OCI-LY7 (cell line): ENCODE measurements at regions of chr19 and their contacts with region 1.

Region 1: GRCh38 chr19:3984908-3985642 is at the start of gene EEF2:
- DNase-seq: peak; percentile 96
- H3K4me3 ChIP-seq: peak within 1 kb of the TSS; percentile 93
- H3K27ac ChIP-seq: peak within 1 kb of the TSS; percentile 87
- H3K4me1 ChIP-seq: peaks cover 42% of the 10 kb centered on the region
- CTCF ChIP-seq: no peak
- total RNA-seq, gene EEF2: 1,633 and 1,634 TPM in 2 replicates

Region 2: DNA sequence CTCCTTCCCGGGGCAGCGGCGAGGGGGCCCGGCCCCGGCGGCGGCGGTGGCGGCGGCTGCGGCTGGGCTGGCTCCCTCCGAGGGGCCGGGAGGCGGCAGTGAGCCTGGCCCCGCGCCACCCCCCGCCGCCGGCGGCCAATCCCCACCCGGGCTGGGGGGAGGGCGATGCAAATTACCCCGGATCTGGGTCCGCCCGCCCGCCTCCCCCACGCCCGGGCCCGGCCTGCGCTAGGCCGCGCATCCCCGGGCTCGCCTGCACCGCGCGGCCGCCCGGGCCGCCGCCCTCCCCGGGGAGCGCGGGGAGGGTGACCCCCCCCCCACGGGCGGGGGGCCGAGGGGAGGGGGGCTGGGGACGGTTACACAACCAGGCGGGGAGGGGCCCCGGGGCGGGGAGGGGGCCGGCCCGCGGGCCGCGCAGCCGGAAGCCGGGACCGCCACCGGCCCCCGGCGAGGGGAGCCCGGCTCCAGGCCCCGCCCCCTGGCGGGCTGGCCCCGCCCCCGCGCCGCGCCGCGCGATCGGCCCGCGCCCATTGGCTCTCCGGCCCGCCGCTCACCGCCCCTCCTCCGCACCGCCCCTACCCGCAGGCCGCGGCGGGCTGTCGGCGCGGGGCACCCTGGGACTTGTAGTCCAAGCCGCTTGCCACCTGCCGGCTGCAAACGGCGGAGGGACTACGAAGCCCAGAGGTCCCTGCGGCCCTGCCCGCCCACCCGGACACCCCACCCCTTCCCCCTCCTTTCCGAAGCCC is 80.5 kb after region 1 on chr19:
- CTCF ChIA-PET with region 1: no interaction called
- POLR2A ChIA-PET with region 1: no interaction called
- intact Hi-C with region 1: loop called (anchors 2 kb)
- DNase-seq: peak; percentile 98
- H3K4me3 ChIP-seq: peak overlapping the region; percentile 100
- H3K27ac ChIP-seq: no peak overlapping the region
- H3K4me1 ChIP-seq: peaks cover 51% of the 10 kb centered on the region
- CTCF ChIP-seq: no peak

Region 3: GRCh38 chr19:4108767-4109625 is 123.9 kb after region 1 on chr19:
- CTCF ChIA-PET with region 1: no interaction called
- POLR2A ChIA-PET with region 1: no interaction called
- intact Hi-C with region 1: no loop called
- DNase-seq: no peak
- H3K4me3 ChIP-seq: no peak overlapping the region
- H3K27ac ChIP-seq: no peak overlapping the region
- H3K4me1 ChIP-seq: no peaks in the 10 kb centered on the region
- CTCF ChIP-seq: no peak

Region 4: DNA sequence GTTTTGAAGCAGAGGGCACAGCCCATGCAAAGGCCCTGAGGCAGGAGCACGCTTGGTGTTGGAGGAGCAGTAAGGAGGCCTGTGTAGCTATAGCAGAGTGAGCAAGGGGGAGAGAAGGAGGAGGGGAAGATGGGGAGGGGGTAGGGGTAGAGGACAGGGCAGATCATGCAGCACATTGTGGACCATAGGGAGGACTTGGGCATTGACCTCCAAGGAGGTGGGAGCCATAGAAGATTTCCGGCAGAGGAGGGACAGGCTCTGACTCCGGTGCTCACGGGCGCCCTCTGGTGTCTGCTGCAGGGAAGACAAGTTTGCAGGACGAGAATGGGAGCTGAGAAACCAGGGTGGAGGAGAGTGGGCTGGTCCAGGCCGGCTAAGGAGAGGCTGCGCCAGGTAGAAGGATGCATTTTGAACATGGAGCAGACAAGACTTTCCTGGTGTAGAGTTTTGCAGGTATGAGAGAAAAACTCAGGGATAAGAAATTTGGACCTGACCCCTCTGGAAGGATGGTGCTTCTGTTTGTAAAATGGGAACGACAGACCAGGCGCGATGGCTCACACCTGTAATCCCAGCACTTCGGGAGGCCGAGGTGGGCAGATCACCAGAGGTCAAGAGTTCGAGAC is 154.7 kb after region 1 on chr19:
- CTCF ChIA-PET with region 1: no interaction called
- POLR2A ChIA-PET with region 1: no interaction called
- intact Hi-C with region 1: loop called (anchors 1 kb)
- DNase-seq: peak; percentile 70
- H3K4me3 ChIP-seq: no peak overlapping the region
- H3K27ac ChIP-seq: no peak overlapping the region
- H3K4me1 ChIP-seq: peaks cover 8% of the 10 kb centered on the region
- CTCF ChIP-seq: peak; percentile 86

Region 5: DNA sequence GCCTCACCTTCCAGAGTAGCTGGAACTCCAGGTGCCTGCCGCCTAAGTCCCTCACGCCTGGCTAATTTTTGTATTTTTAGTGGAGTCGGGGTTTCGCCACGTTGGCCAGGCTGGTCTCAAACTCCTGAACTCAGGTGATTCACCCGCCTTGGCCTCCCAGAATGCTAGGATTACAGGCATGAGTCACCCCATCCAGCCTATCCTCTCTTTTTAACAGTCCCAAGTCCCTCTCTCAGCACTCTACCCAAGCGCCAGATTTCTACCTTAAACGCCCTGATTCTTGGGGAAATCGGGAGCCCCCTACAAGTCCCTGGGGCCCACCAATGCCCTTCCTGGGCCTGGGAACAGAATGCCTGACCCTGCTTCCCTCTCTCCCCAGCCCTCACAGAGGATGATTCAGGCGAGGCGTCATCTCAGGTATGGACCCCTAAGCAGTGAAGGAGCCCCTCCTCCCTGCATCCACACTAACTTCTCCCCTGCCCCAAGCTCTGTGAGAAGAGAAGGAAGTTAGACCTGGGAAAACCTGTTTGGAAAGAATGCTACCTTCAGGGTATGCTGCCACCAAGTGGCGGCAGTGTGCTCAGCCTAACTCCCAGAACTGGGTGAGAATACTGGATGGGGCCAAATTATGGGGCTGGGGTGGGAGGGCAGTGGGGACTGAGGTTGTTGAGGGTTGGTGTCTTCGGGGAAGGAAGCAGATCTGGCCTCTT is 223.5 kb after region 1 on chr19:
- CTCF ChIA-PET with region 1: no interaction called
- POLR2A ChIA-PET with region 1: no interaction called
- intact Hi-C with region 1: loop called (anchors 2 kb)
- DNase-seq: peak; percentile 53
- H3K4me3 ChIP-seq: no peak overlapping the region
- H3K27ac ChIP-seq: no peak overlapping the region
- H3K4me1 ChIP-seq: no peaks in the 10 kb centered on the region
- CTCF ChIP-seq: peak; percentile 78